ENCODE measurements at regions of chr17 and their contacts with region 1.

Region 1: DNA sequence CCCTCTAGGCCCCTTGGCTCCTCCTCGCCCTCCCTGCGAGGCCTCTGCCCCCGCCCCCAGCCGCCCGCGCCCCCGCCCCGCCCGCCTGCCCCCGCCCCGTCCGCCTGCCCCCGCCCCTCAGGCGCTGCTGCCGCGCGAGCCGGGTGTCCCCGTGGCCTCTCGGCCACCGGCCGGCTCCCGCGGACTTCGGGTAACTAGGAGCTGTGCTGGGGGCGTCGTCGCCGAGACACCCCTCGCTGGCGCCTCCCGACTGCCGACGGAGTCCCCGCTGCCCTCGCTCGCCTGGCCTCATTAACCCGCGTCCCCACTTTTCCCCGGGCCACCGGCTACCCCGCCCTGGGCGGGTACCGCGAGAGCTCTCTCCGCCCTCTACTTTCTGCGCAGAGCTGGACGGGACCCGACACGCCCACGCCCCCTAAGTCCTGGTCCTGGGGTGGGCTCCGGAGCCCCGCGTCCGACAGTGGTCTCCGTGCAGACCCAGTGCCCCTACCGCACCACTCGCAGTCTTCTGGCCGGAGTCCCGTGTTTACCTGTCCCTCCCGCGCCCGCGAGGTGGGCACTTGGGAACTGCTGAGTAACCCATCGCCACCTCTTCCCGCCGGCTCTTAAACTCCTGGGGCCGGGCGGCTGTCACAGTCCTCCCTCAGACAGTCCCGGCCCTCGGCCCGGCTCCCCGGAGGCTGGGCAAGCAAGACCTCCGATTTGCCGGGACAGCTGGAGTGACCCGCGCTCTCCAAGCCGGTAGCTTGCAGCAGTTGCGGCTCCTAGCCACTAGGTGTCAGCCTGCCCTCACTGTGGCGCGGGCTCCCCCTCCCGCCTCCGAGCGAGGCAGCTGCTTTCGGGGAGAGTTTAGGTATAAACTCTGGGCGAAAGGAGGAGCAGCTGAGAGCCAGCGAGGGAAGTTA is at the start of gene TLCD1:
- DNase-seq: peak; percentile 93
- H3K4me3 Mint-ChIP-seq: peak within 1 kb of the TSS; percentile 90
- H3K27ac Mint-ChIP-seq: peak within 1 kb of the TSS; percentile 99
- H3K4me1 Mint-ChIP-seq: peaks cover 67% of the 10 kb centered on the region
- H3K27me3 Mint-ChIP-seq: no peaks in the 10 kb centered on the region
- total RNA-seq, gene TLCD1: 2.1 to 2.3 TPM

Region 2: DNA sequence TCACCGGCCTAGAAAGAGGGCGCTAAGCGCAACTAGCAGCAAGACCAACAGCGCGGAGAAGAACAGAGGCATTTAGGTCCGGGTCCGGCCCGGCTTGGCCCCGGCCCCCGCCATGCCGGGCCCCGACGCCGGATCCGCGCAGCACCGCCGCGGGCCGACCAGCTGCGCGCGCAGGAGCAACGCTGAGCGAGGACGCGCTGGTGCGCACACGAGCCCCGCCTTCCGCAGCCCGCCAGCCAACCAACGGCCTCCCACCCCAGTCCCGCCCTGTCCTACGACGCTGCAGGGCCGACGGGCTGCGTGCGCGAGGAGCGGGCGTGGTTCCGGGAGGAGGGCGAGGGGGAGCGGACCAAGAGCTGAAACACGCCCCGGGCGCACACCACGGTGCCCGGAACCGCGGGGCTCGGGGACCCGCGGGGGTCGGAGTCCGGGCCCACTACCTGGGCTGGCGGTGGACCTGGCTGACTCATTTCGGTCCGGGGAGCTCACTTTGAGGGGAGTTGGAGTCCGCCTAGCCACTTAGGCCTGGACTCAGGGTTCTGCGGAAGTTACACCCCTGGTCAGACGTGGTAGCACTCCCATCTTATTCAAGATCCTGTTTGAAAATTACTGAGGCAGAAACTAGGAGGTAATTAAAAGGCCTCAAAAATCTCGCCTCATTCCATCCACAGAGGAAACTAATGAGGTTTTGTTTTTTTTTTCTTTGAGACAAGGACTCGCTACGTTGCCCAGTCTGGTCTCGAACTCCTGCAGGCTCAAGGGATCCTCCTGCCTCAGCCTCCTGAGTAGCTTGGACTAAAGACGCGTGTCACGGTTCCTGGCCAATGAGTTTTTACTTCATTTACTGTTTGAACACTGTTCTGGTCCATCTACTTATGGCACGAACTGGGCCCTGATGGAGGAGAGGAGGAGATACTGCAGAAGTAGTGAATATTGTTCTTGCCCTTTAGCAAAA is 81.2 kb before region 1 on chr17 and contains the start of gene BLTP2:
- CTCF ChIA-PET with region 1: interaction called, 11 read pairs
- POLR2A ChIA-PET with region 1: no interaction called
- DNase-seq: peak; percentile 97
- H3K4me3 Mint-ChIP-seq: peak within 1 kb of the TSS; percentile 90
- H3K27ac Mint-ChIP-seq: peak within 1 kb of the TSS; percentile 94
- H3K4me1 Mint-ChIP-seq: peaks cover 39% of the 10 kb centered on the region
- H3K27me3 Mint-ChIP-seq: no peaks in the 10 kb centered on the region
- total RNA-seq, gene BLTP2: 144 to 145 TPM

Region 3: GRCh38 chr17:28763804-28764266 is 37.4 kb after region 1 on chr17:
- CTCF ChIA-PET with region 1: interaction called, 67 read pairs
- POLR2A ChIA-PET with region 1: no interaction called
- DNase-seq: peak; percentile 86
- H3K4me3 Mint-ChIP-seq: no peak overlapping the region
- H3K27ac Mint-ChIP-seq: no peak overlapping the region
- H3K4me1 Mint-ChIP-seq: peaks cover 8% of the 10 kb centered on the region
- H3K27me3 Mint-ChIP-seq: no peaks in the 10 kb centered on the region

Region 4: GRCh38 chr17:28902819-28903545 is 176.5 kb after region 1 on chr17 and contains the start of gene DHRS13:
- CTCF ChIA-PET with region 1: interaction called, 32 read pairs
- POLR2A ChIA-PET with region 1: no interaction called
- DNase-seq: peak; percentile 93
- H3K4me3 Mint-ChIP-seq: peak within 1 kb of the TSS; percentile 88
- H3K27ac Mint-ChIP-seq: peak within 1 kb of the TSS; percentile 89
- H3K4me1 Mint-ChIP-seq: peaks cover 45% of the 10 kb centered on the region
- H3K27me3 Mint-ChIP-seq: no peaks in the 10 kb centered on the region
- total RNA-seq, gene DHRS13: 26.8 to 27.8 TPM

Region 5: GRCh38 chr17:28944343-28944742 is 217.9 kb after region 1 on chr17:
- CTCF ChIA-PET with region 1: interaction called, 23 read pairs
- POLR2A ChIA-PET with region 1: no interaction called
- DNase-seq: no peak
- H3K4me3 Mint-ChIP-seq: no peak overlapping the region
- H3K27ac Mint-ChIP-seq: no peak overlapping the region
- H3K4me1 Mint-ChIP-seq: peaks cover 80% of the 10 kb centered on the region
- H3K27me3 Mint-ChIP-seq: no peaks in the 10 kb centered on the region

Region 6: DNA sequence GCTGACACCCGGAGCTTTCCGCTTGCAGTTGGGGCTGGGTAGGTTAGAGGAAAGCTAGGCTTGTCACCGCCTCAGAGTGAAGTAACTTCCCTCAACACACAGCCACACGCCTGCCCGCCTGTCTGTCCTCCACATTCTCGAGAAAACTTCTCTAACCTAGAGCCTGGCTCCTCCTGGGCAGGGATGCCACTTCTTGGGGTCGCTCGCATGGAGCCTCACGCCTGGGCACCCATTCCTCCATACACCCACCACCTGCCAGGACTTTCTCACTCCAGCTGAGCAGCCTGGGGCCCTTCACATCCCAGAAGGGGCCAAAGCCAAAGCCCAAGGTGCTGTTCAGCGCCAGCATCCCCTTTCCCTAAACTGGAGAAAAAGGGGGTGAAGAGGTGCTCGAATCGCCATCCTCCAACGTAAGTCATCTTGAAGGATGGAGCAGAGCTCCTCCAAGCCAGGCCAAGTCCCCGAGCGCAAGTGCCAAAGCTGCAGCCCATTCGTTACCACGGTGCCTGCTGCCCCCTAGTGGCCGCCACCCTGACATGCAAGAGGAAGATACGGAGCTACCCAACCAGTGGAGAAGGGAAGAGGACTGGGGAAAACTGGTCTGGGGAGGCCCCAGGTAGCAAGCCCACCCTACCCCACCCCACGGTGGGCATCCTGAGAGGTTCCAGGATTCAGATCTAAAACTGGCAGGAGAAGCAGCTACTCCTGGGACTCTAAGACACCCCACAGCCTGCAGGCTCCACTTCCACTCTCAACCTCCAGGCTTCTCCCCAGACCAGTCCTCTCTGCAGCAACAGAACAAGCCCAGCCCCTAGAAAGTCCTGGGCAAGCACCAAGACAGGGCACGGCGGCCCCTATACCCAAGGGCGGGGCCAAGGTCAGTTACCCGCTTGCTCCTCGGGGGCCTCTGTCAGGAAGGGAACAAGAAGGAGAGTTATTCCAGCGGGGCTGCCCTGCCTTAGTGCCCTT is 390.6 kb after region 1 on chr17:
- CTCF ChIA-PET with region 1: interaction called, 10 read pairs
- POLR2A ChIA-PET with region 1: no interaction called
- DNase-seq: peak; percentile 77
- H3K4me3 Mint-ChIP-seq: no peak overlapping the region
- H3K27ac Mint-ChIP-seq: no peak overlapping the region
- H3K4me1 Mint-ChIP-seq: peaks cover 5% of the 10 kb centered on the region
- H3K27me3 Mint-ChIP-seq: no peaks in the 10 kb centered on the region

Measured in activated CD4-positive, alpha-beta T cell treated with anti-CD3 and anti-CD28 coated beads, Interleukin-2, amount 10 ng/mL, durations not matched to agents 7 days and 5 days (primary cell).